Esophagus muscularis mucosa (tissue), 4 donors: ENCODE measurements at regions of chr17 and their contacts with region 1.

Region 1: DNA sequence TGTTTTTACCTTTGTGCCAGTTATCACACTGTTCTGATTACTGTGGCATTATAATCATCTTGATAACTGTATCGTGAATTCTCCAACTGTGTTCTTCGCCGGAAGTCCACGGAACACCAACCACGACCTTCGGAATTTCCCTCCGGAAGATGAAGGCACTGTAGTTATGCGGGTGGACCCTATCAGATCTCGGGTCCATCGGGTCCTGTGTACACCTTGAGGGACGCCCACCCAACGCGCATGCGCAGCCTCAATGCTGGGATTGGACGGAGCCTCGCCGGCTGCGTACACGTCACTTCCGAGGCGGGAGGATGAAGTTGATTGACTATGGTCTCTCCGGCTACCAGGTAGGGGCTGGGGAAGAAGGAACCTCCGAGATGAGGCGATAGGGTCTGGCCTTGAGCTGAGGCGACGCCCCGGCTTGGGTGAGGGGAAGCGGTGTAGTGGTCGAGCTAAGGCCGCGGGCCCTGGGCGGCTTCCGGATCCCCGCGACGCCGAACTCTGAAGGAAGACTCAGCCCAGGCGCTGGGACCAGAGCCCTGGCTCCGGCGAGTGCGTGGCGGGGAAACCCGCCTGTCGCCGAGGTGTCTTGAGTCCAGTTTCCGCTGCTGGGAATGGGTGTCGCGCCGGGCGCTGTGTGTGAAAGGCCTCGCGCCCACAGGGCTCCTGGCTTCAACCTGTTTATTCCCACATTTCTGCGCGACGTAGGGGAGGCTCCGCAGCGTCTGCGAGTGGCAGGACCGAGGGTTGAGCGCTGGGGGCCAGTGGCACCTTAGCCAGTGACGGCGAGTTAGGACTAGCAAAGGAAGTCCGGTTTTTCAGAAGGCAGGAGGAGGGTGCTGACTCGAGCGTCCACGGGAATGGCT is at the start of gene DHRS7B:
- DNase-seq: peak; percentile 99
- H3K4me3 ChIP-seq: peak within 1 kb of the TSS; percentile 75 to 95 (median 80)
- H3K27ac ChIP-seq: peak within 1 kb of the TSS; percentile 90 to 97 (median 93)
- H3K4me1 ChIP-seq: peaks cover 16 to 36% (median 30%) of the 10 kb centered on the region in 4 donors
- H3K27me3 ChIP-seq: no peaks in the 10 kb centered on the region
- CTCF ChIP-seq: no peak
- EP300 ChIP-seq: no peak
- POLR2A ChIP-seq: no peak
- total RNA-seq, gene DHRS7B: 24.0 to 30.3 (median 28.8) TPM

Region 2: GRCh38 chr17:20955427-20956323 is 171.2 kb before region 1 on chr17:
- intact Hi-C with region 1: no loop called
- DNase-seq: no peak
- H3K4me3 ChIP-seq: no peak overlapping the region
- H3K27ac ChIP-seq: peak overlapping the region in 3 of 4 donors; percentile 20 to 63 (median 28)
- H3K4me1 ChIP-seq: peaks cover 0 to 6% (median 3%) of the 10 kb centered on the region in 4 donors
- H3K27me3 ChIP-seq: peaks cover 0 to 10% (median 2%) of the 10 kb centered on the region in 4 donors
- CTCF ChIP-seq: no peak
- EP300 ChIP-seq: no peak
- POLR2A ChIP-seq: no peak

Region 3: GRCh38 chr17:21043286-21044232 is 83.3 kb before region 1 on chr17:
- intact Hi-C with region 1: loop called (anchors 10 kb)
- DNase-seq: peak; percentile 99
- H3K4me3 ChIP-seq: peak overlapping the region; percentile 54 to 100 (median 90)
- H3K27ac ChIP-seq: peak overlapping the region; percentile 93 to 100 (median 100)
- H3K4me1 ChIP-seq: peaks cover 24 to 39% (median 37%) of the 10 kb centered on the region in 4 donors
- H3K27me3 ChIP-seq: no peaks in the 10 kb centered on the region
- CTCF ChIP-seq: peak; percentile 88 to 96 (median 92)
- EP300 ChIP-seq: no peak
- POLR2A ChIP-seq: no peak

Region 4: GRCh38 chr17:21161498-21162393 is 34.9 kb after region 1 on chr17:
- intact Hi-C with region 1: no loop called
- DNase-seq: no peak
- H3K4me3 ChIP-seq: no peak overlapping the region
- H3K27ac ChIP-seq: peak overlapping the region; percentile 5 to 72 (median 46)
- H3K4me1 ChIP-seq: peaks cover 28 to 48% (median 35%) of the 10 kb centered on the region in 4 donors
- H3K27me3 ChIP-seq: no peaks in the 10 kb centered on the region
- CTCF ChIP-seq: no peak
- EP300 ChIP-seq: no peak
- POLR2A ChIP-seq: no peak

Region 5: DNA sequence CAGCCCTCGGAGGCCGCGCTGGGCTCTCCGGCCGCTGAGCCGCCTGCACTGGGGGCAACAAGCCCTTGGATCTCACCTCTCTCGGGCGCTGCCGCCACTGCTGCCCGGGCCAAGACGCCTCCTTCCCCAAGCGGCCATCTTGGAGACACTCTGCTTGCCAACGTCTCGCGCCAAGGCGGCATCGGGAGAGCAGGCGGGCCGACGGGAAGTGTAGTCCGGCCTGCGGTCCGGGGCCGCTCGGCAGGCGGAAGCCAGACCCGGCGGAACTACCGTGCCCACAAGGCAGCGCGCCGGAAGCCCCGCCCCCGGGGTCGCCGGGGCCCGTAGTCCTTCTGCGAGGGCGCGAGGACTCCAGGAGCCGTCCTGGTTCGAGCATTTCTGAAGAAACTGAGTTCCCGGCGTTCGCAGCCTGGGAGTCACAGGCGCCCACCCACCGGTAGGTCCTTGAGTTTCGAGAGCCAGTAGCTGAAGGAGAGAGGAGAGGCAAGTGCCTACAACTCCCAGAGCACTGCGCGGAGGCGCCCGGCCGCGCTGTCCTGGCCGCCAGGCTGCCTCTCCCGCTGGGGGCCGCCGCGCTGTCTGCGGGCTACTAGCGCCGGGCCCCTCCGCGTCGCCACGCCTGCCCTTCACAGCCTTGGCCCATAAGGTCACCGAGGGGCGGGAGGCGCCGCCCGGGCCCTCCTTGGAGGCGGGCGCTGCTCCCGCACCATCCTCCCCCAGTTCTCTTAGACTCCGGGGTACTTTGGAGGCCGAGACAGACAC is 87.3 kb after region 1 on chr17 and contains the start of gene TMEM11:
- intact Hi-C with region 1: loop called (anchors 2 kb)
- DNase-seq: peak; percentile 98
- H3K4me3 ChIP-seq: peak within 1 kb of the TSS; percentile 90 to 97 (median 95)
- H3K27ac ChIP-seq: peak within 1 kb of the TSS; percentile 89 to 96 (median 92)
- H3K4me1 ChIP-seq: peaks cover 51 to 71% (median 56%) of the 10 kb centered on the region in 4 donors
- H3K27me3 ChIP-seq: peaks cover 0 to 7% (median 0%) of the 10 kb centered on the region in 4 donors
- CTCF ChIP-seq: no peak
- EP300 ChIP-seq: no peak
- POLR2A ChIP-seq: peak; percentile 81
- total RNA-seq, gene TMEM11: 24.1 to 31.0 (median 26.0) TPM

Region 6: GRCh38 chr17:21252796-21253645 is 126.1 kb after region 1 on chr17 and contains the start of gene NATD1:
- intact Hi-C with region 1: loop called (anchors 5 kb)
- DNase-seq: peak; percentile 98
- H3K4me3 ChIP-seq: peak within 1 kb of the TSS; percentile 63 to 90 (median 75)
- H3K27ac ChIP-seq: peak within 1 kb of the TSS; percentile 64 to 79 (median 77)
- H3K4me1 ChIP-seq: peaks cover 41 to 51% (median 44%) of the 10 kb centered on the region in 4 donors
- H3K27me3 ChIP-seq: no peaks in the 10 kb centered on the region
- CTCF ChIP-seq: peak in 1 of 3 experiments; percentile 8
- EP300 ChIP-seq: no peak
- POLR2A ChIP-seq: no peak
- total RNA-seq, gene NATD1: 12.3 to 26.2 (median 18.1) TPM

Region 7: GRCh38 chr17:21275579-21276263 is 148.8 kb after region 1 on chr17:
- intact Hi-C with region 1: loop called (anchors 2 kb)
- DNase-seq: peak; percentile 96
- H3K4me3 ChIP-seq: peak overlapping the region; percentile 65 to 77 (median 73)
- H3K27ac ChIP-seq: peak overlapping the region; percentile 62 to 76 (median 68)
- H3K4me1 ChIP-seq: peaks cover 11 to 45% (median 36%) of the 10 kb centered on the region in 4 donors
- H3K27me3 ChIP-seq: no peaks in the 10 kb centered on the region
- CTCF ChIP-seq: peak in 1 of 3 experiments; percentile 12
- EP300 ChIP-seq: no peak
- POLR2A ChIP-seq: no peak

Region 8: GRCh38 chr17:21457051-21458026 is 330.5 kb after region 1 on chr17:
- intact Hi-C with region 1: loop called (anchors 10 kb)
- DNase-seq: peak; percentile 97
- H3K4me3 ChIP-seq: no peak overlapping the region
- H3K27ac ChIP-seq: peak overlapping the region in 3 of 4 donors; percentile 45 to 54 (median 46)
- H3K4me1 ChIP-seq: peaks cover 13 to 24% (median 20%) of the 10 kb centered on the region in 4 donors
- H3K27me3 ChIP-seq: peaks cover 0 to 17% (median 0%) of the 10 kb centered on the region in 4 donors
- CTCF ChIP-seq: peak; percentile 92 to 100 (median 96)
- EP300 ChIP-seq: no peak
- POLR2A ChIP-seq: no peak

Region 9: DNA sequence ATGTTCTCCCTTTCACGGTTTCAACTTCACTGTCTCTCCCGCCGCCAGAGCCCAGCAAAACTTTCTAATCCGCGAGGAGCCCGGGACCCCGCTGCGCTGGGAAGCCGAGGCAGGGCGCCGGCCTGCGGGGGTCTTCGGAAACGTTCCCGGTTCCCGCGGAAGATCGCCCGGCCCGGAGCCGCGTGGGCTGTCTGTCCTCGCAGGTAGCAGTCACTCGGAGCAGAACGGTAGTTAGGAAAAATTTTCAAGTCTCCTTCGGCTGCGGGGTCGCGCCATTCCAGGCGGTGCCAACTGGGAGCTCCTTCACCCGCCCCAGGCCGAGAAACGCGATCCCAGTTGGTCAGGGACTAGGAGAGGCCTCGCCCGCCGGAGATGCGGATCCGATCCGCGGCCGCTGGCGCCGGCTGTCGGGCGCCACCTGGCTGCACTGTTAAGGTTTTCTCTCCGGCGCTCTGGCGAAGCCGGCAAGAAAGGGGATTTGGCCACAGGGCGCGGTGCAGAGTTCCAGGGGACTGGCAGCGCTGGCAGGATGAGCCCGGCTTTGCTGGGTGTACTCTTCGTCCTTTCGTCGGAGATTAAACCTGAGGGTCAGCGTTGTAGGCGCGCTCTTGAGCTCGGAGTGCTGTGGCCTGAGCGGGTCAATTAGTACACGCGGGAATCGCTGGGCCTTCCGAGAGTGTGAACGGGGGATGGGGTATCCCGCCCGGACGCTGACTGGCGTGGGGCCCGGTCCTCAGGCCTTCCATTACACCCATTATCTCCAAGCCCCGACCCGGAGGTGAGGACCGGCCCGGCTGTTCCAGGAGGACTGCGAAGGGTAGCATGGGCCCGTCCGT is 384.7 kb after region 1 on chr17:
- intact Hi-C with region 1: loop called (anchors 5 kb)
- DNase-seq: no peak
- H3K4me3 ChIP-seq: peak overlapping the region; percentile 56 to 67 (median 58)
- H3K27ac ChIP-seq: peak overlapping the region; percentile 43 to 63 (median 50)
- H3K4me1 ChIP-seq: peaks cover 9 to 19% (median 18%) of the 10 kb centered on the region in 4 donors
- H3K27me3 ChIP-seq: peaks cover 0 to 9% (median 0%) of the 10 kb centered on the region in 4 donors
- CTCF ChIP-seq: peak; percentile 44 to 84 (median 83)
- EP300 ChIP-seq: no peak
- POLR2A ChIP-seq: no peak